Caco-2 (cell line): ENCODE measurements at regions of chr3 and their contacts with region 1.

Region 1: DNA sequence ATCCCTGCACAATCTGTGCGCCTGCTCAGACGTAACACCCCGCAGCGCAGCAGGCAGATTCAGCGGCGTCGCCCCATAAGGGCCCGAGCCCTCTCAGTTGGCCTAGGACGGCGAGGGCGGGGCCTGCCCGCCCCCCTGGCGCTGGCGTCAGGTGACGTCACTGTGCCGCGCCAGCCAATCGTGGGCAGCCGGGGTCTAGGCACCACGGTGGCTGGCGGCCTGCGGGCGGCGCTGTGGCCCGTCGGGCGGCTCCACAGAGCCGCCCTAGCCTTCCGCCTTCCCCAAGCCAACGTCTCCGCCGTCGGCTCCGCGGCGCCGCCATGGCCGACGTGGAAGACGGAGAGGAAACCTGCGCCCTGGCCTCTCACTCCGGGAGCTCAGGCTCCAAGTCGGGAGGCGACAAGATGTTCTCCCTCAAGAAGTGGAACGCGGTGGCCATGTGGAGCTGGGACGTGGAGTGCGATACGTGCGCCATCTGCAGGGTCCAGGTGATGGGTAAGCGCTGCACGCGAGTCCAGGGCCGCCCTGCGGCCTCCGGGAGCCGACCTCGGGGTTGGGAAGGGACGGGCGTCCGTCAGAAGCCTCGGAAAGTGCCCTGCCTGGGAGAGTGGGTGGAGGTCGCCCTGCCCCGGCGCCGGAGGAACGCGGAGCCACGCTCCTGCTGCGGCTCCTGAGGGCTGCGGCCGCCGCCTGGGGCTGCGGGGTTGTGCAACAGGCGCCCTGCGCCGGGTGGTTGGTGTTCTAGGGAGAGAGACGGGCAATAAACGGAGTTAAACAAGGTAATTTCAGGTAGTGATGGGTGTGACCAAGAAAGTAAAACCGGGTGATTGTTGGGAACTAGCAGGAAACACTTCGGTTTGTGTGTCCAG is at the start of gene RNF7:
- DNase-seq: peak; percentile 94 to 97
- H3K4me3 ChIP-seq: peak within 1 kb of the TSS; percentile 98
- H3K4me3 Mint-ChIP-seq: peak within 1 kb of the TSS; percentile 97
- H3K27ac Mint-ChIP-seq: peak within 1 kb of the TSS; percentile 98
- H3K4me1 ChIP-seq: peaks cover 23% of the 10 kb centered on the region
- H3K4me1 Mint-ChIP-seq: no peaks in the 10 kb centered on the region
- H3K27me3 ChIP-seq: no peaks in the 10 kb centered on the region
- H3K27me3 Mint-ChIP-seq: peaks cover 4% of the 10 kb centered on the region
- CTCF ChIP-seq: peak; percentile 64 to 78
- total RNA-seq, gene RNF7: 87.7 and 96.3 TPM in 2 replicates

Region 2: DNA sequence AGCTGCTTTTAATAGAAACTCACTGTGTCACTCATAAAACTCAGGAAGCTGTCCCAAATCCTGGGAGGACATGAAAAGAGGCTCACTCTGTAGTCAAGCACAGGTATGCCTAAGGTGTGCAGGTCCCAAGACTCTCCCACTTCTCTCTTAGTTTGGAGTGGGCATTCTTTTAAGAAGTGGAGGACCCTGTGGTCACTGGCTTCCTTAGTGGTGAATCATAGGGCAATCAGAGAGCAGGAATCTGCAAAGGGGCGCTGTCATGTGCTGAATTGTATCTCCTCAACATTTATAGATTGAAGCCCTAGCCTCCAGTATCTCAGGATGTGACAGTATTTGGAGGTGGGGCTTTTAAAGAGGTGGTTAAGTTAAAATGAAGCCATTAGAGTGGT is 417.2 kb before region 1 on chr3:
- CTCF ChIA-PET with region 1: no interaction called
- POLR2A ChIA-PET with region 1: no interaction called
- intact Hi-C with region 1: no loop called
- DNase-seq: no peak
- H3K4me3 ChIP-seq: no peak overlapping the region
- H3K4me3 Mint-ChIP-seq: no peak overlapping the region
- H3K27ac Mint-ChIP-seq: no peak overlapping the region
- H3K4me1 ChIP-seq: peaks cover 20% of the 10 kb centered on the region
- H3K4me1 Mint-ChIP-seq: peaks cover 17% of the 10 kb centered on the region
- H3K27me3 ChIP-seq: no peaks in the 10 kb centered on the region
- H3K27me3 Mint-ChIP-seq: no peaks in the 10 kb centered on the region
- CTCF ChIP-seq: no peak

Region 3: DNA sequence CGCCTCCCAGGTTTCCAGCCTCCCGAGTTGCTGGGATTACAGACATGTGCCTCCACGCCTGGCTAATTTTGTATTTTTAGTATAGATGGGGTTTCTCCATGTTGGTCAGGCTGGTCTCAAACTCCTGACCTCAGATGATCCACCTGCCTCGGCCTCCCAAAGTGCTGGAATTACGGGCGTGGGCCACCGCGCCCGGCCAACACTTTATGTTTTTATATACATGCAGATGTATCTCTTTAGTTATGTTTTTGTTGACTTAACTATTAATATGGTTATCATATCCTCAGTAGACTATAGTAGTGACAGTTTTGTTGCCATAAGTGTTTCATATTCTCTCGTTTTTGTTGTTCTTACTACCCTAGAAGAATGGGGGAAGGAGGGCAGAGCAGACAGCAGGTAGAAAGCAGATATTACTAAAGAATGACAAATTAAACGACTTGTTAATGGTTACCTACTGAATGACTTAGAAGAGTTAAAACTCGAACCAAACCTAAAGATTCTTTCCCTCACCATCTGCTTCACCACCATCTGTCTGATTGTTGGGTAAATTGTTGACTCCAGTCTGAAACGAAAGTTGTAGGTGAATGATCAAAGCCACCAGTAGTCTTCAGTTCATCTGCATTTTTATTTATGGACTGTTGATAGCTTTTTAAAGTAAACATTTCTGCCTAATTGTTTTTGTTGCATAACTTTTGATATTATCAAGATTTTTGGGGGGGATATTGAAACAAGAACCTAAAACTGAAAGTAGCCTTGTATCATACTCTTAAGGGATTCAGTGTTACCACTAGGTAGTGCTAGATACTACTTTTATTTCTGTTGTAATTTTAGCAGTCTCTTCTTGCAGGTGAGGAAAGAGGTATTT is 162.1 kb before region 1 on chr3:
- CTCF ChIA-PET with region 1: no interaction called
- POLR2A ChIA-PET with region 1: no interaction called
- intact Hi-C with region 1: loop called (anchors 2 kb)
- DNase-seq: no peak
- H3K4me3 ChIP-seq: no peak overlapping the region
- H3K4me3 Mint-ChIP-seq: no peak overlapping the region
- H3K27ac Mint-ChIP-seq: peak overlapping the region; percentile 3
- H3K4me1 ChIP-seq: no peaks in the 10 kb centered on the region
- H3K4me1 Mint-ChIP-seq: no peaks in the 10 kb centered on the region
- H3K27me3 ChIP-seq: no peaks in the 10 kb centered on the region
- H3K27me3 Mint-ChIP-seq: no peaks in the 10 kb centered on the region
- CTCF ChIP-seq: peak; percentile 35 to 52

Region 4: DNA sequence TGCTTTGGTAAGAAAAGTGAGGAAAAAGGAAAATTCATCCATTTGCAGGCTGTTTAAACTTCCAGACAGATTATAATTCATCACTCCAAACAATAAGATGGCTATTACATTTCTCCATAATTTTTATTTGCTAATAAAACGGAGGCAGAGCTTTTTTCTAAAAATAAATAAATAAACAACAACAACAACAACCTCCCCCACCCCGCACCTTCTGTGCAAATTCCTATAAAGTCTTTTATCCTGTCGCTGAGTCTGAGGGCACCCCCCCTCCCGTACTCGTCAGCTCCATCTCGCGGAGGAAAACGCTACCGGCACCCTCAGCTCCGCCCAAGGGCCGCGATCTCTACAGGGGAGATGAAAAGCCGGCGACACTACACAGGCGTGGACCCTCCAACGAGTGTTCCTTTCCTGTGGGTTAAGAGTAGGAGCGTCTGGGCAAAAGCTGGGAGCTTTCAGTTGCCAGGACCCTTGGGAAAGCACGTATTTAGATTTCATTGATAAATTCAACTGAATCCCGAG is 137.2 kb after region 1 on chr3:
- CTCF ChIA-PET with region 1: no interaction called
- POLR2A ChIA-PET with region 1: no interaction called
- intact Hi-C with region 1: loop called (anchors 1 kb)
- DNase-seq: peak; percentile 85 to 90
- H3K4me3 ChIP-seq: peak overlapping the region; percentile 57
- H3K4me3 Mint-ChIP-seq: peak overlapping the region; percentile 93
- H3K27ac Mint-ChIP-seq: peak overlapping the region; percentile 94
- H3K4me1 ChIP-seq: peaks cover 15% of the 10 kb centered on the region; the same call in 1 of the 2 replicates
- H3K4me1 Mint-ChIP-seq: peaks cover 6% of the 10 kb centered on the region
- H3K27me3 ChIP-seq: no peaks in the 10 kb centered on the region
- H3K27me3 Mint-ChIP-seq: no peaks in the 10 kb centered on the region
- CTCF ChIP-seq: peak; percentile 78 to 93

Region 5: GRCh38 chr3:141894524-141895178 is 156.4 kb after region 1 on chr3:
- CTCF ChIA-PET with region 1: no interaction called
- POLR2A ChIA-PET with region 1: no interaction called
- intact Hi-C with region 1: no loop called
- DNase-seq: peak in 1 of 2 experiments; percentile 45
- H3K4me3 ChIP-seq: no peak overlapping the region
- H3K4me3 Mint-ChIP-seq: no peak overlapping the region
- H3K27ac Mint-ChIP-seq: no peak overlapping the region
- H3K4me1 ChIP-seq: peaks cover 5% of the 10 kb centered on the region
- H3K4me1 Mint-ChIP-seq: no peaks in the 10 kb centered on the region
- H3K27me3 ChIP-seq: no peaks in the 10 kb centered on the region
- H3K27me3 Mint-ChIP-seq: no peaks in the 10 kb centered on the region
- CTCF ChIP-seq: no peak

Region 6: GRCh38 chr3:141913150-141913811 is 175.0 kb after region 1 on chr3:
- CTCF ChIA-PET with region 1: interaction called, 3 read pairs
- POLR2A ChIA-PET with region 1: no interaction called
- intact Hi-C with region 1: loop called (anchors 1 kb)
- DNase-seq: peak in 1 of 2 experiments; percentile 57
- H3K4me3 ChIP-seq: no peak overlapping the region
- H3K4me3 Mint-ChIP-seq: no peak overlapping the region
- H3K27ac Mint-ChIP-seq: no peak overlapping the region
- H3K4me1 ChIP-seq: no peaks in the 10 kb centered on the region
- H3K4me1 Mint-ChIP-seq: no peaks in the 10 kb centered on the region
- H3K27me3 ChIP-seq: no peaks in the 10 kb centered on the region
- H3K27me3 Mint-ChIP-seq: no peaks in the 10 kb centered on the region
- CTCF ChIP-seq: peak; percentile 45 to 53